ENCODE measurements at regions of chr2 and their contacts with region 1.

Region 1: GRCh38 chr2:48589170-48589767 is 28.4 kb upstream of the GTF2A1L start:
- DNase-seq: peak; percentile 33
- ATAC-seq: peak; percentile 55
- H3K4me3 ChIP-seq: no peak overlapping the region
- H3K27ac ChIP-seq: no peak overlapping the region
- H3K4me1 ChIP-seq: no peaks in the 10 kb centered on the region
- H3K27me3 ChIP-seq: no peaks in the 10 kb centered on the region
- CTCF ChIP-seq: peak; percentile 75
- EP300 ChIP-seq: no peak
- POLR2A ChIP-seq: no peak
- RAD21 ChIP-seq: peak; percentile 55

Region 2: DNA sequence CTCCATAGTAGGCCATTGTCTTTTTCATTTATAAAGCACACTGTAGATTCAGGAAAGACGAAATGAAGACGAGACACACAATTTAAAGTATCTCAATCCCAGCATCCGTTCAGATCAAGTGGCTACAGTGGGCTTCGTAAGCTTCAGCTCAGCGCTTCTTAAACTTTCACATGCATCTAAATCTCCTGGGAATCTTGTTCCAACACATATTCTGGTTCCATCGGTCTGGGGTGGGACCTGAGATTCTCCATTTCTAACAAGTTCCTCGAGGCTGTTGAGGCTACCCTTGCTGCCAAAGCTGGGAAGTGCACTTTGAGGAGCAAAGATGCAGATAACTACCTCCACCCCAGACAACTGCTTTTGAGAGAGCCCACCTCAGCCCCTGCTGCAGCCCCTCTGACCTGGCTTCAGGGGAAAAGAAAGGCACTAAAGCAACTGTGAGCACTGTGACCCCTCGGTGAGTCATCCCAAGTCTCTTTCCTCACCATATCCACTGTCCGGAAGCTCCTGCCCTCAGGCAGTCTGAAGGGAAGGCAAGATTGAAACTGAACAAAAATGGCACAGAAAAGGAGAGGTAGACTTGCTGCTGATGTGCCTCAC is 481.8 kb before region 1 on chr2:
- CTCF ChIA-PET with region 1: no interaction called
- POLR2A ChIA-PET with region 1: no interaction called
- in situ Hi-C with region 1: no loop called
- intact Hi-C with region 1: loop called (anchors 5 kb)
- DNase-seq: peak; percentile 39
- ATAC-seq: no peak
- H3K4me3 ChIP-seq: peak overlapping the region in 1 of 3 experiments; percentile 74; a peak in 2 of 6 replicates
- H3K27ac ChIP-seq: no peak overlapping the region
- H3K4me1 ChIP-seq: peaks cover 51% of the 10 kb centered on the region
- H3K27me3 ChIP-seq: peaks cover 0 to 3% of the 10 kb centered on the region in 2 experiments; a peak in 1 of 5 replicates
- CTCF ChIP-seq: no peak
- EP300 ChIP-seq: peak in 1 of 2 experiments; percentile 10; a peak in 1 of 4 replicates
- POLR2A ChIP-seq: no peak
- RAD21 ChIP-seq: no peak

Region 3: DNA sequence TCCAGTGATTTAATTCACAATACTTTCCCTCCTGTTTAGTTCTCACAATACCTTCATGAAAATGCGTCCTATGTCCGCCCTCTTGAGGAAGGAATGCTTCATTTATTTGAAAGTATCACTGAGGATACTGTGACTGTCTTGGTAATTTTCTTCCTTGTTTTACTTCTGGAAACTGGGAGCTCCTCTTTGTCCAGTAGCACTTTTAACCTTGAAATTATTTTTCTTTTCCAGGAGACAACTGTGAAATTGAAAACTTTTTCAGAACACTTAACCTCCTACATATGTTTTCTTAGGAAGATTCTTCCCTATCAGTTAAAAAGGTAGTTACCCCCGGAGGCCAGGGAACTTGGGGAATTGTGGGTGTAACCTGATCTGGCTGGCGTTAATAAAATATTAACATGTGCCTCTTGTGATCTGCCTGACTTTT is 118.2 kb before region 1 on chr2:
- CTCF ChIA-PET with region 1: interaction called, 8 read pairs
- POLR2A ChIA-PET with region 1: no interaction called
- in situ Hi-C with region 1: no loop called
- intact Hi-C with region 1: loop called (anchors 2 kb)
- DNase-seq: peak; percentile 69
- ATAC-seq: peak; percentile 90
- H3K4me3 ChIP-seq: no peak overlapping the region
- H3K27ac ChIP-seq: no peak overlapping the region
- H3K4me1 ChIP-seq: no peaks in the 10 kb centered on the region
- H3K27me3 ChIP-seq: no peaks in the 10 kb centered on the region
- CTCF ChIP-seq: peak; percentile 76
- EP300 ChIP-seq: no peak; a peak in 1 of 4 replicates
- POLR2A ChIP-seq: no peak
- RAD21 ChIP-seq: peak; percentile 51; the same call in 1 of the 2 replicates

Region 4: DNA sequence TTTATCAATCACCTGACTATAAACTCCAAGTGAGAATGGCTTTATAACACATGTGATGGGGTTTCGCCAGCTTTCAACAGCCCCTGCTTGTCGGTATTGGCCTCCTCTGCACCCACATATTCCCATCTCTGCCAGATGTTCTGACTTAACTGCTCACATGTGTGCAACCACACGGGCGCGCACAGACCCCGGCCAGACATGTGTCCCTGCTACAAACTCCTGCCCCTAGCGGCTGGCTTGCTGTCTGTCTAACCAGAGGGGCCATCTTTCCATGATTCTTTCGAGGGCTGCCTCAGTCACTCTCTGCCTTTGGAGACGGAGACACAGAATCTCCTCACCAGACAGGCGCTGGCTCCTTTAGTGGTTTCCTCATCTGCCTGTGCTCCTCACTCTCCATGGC is 44.0 kb before region 1 on chr2:
- CTCF ChIA-PET with region 1: no interaction called
- POLR2A ChIA-PET with region 1: no interaction called
- in situ Hi-C with region 1: no loop called
- intact Hi-C with region 1: loop called (anchors 1 kb)
- DNase-seq: peak; percentile 66
- ATAC-seq: peak; percentile 98
- H3K4me3 ChIP-seq: no peak overlapping the region
- H3K27ac ChIP-seq: no peak overlapping the region
- H3K4me1 ChIP-seq: peaks cover 11% of the 10 kb centered on the region
- H3K27me3 ChIP-seq: no peaks in the 10 kb centered on the region; a peak in 1 of 5 replicates
- CTCF ChIP-seq: peak; percentile 71
- EP300 ChIP-seq: no peak
- POLR2A ChIP-seq: no peak
- RAD21 ChIP-seq: peak; percentile 71

Region 5: GRCh38 chr2:48566592-48567255 is 22.5 kb before region 1 on chr2:
- CTCF ChIA-PET with region 1: interaction called, 12 read pairs
- POLR2A ChIA-PET with region 1: no interaction called
- in situ Hi-C with region 1: no loop called
- intact Hi-C with region 1: loop called (anchors 1 kb)
- DNase-seq: peak; percentile 29
- ATAC-seq: peak; percentile 77
- H3K4me3 ChIP-seq: no peak overlapping the region
- H3K27ac ChIP-seq: no peak overlapping the region
- H3K4me1 ChIP-seq: no peaks in the 10 kb centered on the region
- H3K27me3 ChIP-seq: no peaks in the 10 kb centered on the region
- CTCF ChIP-seq: peak; percentile 56
- EP300 ChIP-seq: no peak
- POLR2A ChIP-seq: no peak
- RAD21 ChIP-seq: peak; percentile 33; the same call in 1 of the 2 replicates